Heart left ventricle (tissue), 16 donors: ENCODE measurements at regions of chr3 and their contacts with region 1.

Region 1: GRCh38 chr3:102536456-102536855 is 101.6 kb downstream of the ZPLD1 start:
- DNase-seq: no peak
- ATAC-seq: no peak
- H3K4me3 ChIP-seq: no peak overlapping the region
- H3K27ac ChIP-seq: no peak overlapping the region
- H3K4me1 ChIP-seq: peaks cover 0 to 3% (median 0%) of the 10 kb centered on the region in 12 donors
- H3K27me3 ChIP-seq: peaks cover 0 to 4% (median 0%) of the 10 kb centered on the region in 9 donors
- CTCF ChIP-seq: peak; percentile 10 to 62 (median 38)
- POLR2A ChIP-seq: no peak

Region 2: DNA sequence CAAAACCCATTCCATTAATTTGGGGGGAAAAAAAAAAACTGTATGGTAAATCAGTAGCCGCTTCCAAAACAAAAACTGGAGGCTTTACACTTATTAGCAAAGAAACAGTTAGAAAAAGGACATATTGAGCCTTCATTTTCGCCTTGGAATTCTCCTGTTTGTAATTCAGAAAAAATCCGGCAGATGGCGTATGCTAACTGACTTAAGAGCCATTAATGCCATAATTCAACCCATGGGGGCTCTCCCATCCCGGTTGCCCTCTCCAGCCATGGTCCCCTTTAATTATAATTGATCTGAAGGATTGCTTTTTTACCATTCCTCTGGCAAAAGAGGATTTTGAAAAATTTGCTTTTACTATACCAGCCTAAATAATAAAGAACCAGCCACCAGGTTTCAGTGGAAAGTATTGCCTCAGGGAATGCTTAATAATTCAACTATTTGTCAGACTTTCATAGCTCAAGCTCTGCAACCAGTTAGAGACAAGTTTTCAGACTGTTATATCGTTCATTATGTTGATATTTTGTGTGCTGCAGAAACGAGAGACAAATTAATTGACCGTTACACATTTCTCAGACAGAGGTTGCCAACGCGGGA is 840.6 kb before region 1 on chr3:
- intact Hi-C with region 1: loop called in 1 of 10 experiments (anchors 10 kb)
- DNase-seq: no peak
- ATAC-seq: no peak
- H3K4me3 ChIP-seq: no peak overlapping the region
- H3K27ac ChIP-seq: no peak overlapping the region
- H3K4me1 ChIP-seq: peaks cover 0 to 5% (median 0%) of the 10 kb centered on the region in 12 donors
- H3K27me3 ChIP-seq: no peaks in the 10 kb centered on the region
- CTCF ChIP-seq: peak; percentile 58 to 82 (median 70)
- POLR2A ChIP-seq: no peak

Region 3: GRCh38 chr3:101803173-101803782 is 733.2 kb before region 1 on chr3:
- intact Hi-C with region 1: loop called in 7 of 10 experiments (anchors 5 to 10 kb)
- DNase-seq: peak in 2 of 5 donors; percentile 54 to 60
- ATAC-seq: peak; percentile 83 to 94 (median 88)
- H3K4me3 ChIP-seq: no peak overlapping the region
- H3K27ac ChIP-seq: peak overlapping the region in 1 of 12 donors; percentile 5
- H3K4me1 ChIP-seq: peaks cover 0 to 5% (median 0%) of the 10 kb centered on the region in 12 donors
- H3K27me3 ChIP-seq: no peaks in the 10 kb centered on the region
- CTCF ChIP-seq: peak; percentile 74 to 95 (median 87)
- POLR2A ChIP-seq: no peak

Region 4: DNA sequence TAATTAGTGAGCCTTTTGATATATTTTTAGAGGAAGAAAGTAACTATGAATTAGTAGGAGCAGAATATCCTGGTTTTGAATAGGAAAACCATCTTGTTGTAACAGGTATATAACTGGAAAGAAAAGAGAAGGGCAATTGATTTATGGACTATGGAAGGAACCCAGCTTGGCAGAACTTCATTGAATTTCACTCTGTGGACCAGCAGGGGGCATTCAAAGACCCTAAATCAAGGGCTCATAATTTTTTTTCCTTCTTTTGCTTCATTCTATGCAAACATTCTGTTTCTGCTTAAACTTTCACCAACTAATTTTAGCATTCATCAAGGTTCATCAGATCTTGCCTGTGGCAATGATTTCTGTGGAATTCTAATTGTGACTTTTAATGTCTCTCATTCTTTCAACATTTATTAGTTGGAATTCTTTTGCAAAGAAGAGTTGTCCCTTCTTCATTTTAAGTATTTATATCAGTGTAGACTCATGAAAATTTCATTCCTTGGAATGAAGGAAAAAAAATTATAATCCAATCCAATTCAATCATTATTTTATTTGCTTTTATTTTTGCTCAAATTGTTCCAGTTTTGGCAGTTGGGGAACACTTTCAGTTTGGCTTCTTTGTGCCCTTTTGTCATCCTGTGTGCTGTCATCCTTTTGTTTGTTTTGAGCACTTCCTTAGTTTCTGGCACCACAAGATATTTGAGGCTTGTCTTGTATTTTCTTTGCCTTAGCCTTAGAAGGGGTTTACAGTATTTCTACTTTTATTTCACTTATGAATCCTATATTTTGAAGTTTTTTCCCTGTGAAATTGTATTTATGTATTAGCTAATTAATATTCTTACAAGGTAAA is 727.1 kb before region 1 on chr3:
- intact Hi-C with region 1: loop called in 9 of 10 experiments (anchors 5 to 10 kb)
- DNase-seq: no peak
- ATAC-seq: peak in 2 of 4 donors; percentile 39 to 51
- H3K4me3 ChIP-seq: no peak overlapping the region
- H3K27ac ChIP-seq: peak overlapping the region in 2 of 12 donors; percentile 31 to 63
- H3K4me1 ChIP-seq: peaks cover 0 to 28% (median 15%) of the 10 kb centered on the region in 12 donors
- H3K27me3 ChIP-seq: no peaks in the 10 kb centered on the region
- CTCF ChIP-seq: peak; percentile 45 to 79 (median 70)
- POLR2A ChIP-seq: no peak

Region 5: GRCh38 chr3:102235679-102236078 is 300.8 kb before region 1 on chr3:
- intact Hi-C with region 1: loop called in 3 of 10 experiments (anchors 2 to 5 kb)
- DNase-seq: no peak
- ATAC-seq: peak in 1 of 4 donors; percentile 55
- H3K4me3 ChIP-seq: no peak overlapping the region
- H3K27ac ChIP-seq: no peak overlapping the region
- H3K4me1 ChIP-seq: peaks cover 0 to 4% (median 0%) of the 10 kb centered on the region in 12 donors
- H3K27me3 ChIP-seq: no peaks in the 10 kb centered on the region
- CTCF ChIP-seq: peak in 7 of 12 donors; percentile 9 to 73 (median 28)
- POLR2A ChIP-seq: no peak